ENCODE measurements at regions of chrX and their contacts with region 1.

Region 1: GRCh38 chrX:104195489-104196084 is 29.3 kb downstream of the FAM199X start:
- DNase-seq: peak in 5 of 9 donors; percentile 6 to 34 (median 22)
- ATAC-seq: peak; percentile 61
- H3K4me3 ChIP-seq: no peak overlapping the region
- H3K4me3 Mint-ChIP-seq: no peak overlapping the region
- H3K27ac ChIP-seq: no peak overlapping the region
- H3K27ac Mint-ChIP-seq: no peak overlapping the region
- H3K4me1 ChIP-seq: no peaks in the 10 kb centered on the region
- H3K4me1 Mint-ChIP-seq: peaks cover 0 to 5% (median 0%) of the 10 kb centered on the region in 7 donors
- H3K27me3 ChIP-seq: no peaks in the 10 kb centered on the region
- H3K27me3 Mint-ChIP-seq: no peaks in the 10 kb centered on the region

Region 2: GRCh38 chrX:103932133-103932532 is 263.5 kb before region 1 on chrX:
- CTCF ChIA-PET with region 1: no interaction called
- POLR2A ChIA-PET with region 1: no interaction called
- intact Hi-C with region 1: no loop called
- DNase-seq: no peak
- ATAC-seq: no peak
- H3K4me3 ChIP-seq: no peak overlapping the region
- H3K4me3 Mint-ChIP-seq: no peak overlapping the region
- H3K27ac ChIP-seq: no peak overlapping the region
- H3K27ac Mint-ChIP-seq: no peak overlapping the region
- H3K4me1 ChIP-seq: no peaks in the 10 kb centered on the region
- H3K4me1 Mint-ChIP-seq: peaks cover 0 to 3% (median 0%) of the 10 kb centered on the region in 7 donors
- H3K27me3 ChIP-seq: no peaks in the 10 kb centered on the region
- H3K27me3 Mint-ChIP-seq: no peaks in the 10 kb centered on the region

Region 3: DNA sequence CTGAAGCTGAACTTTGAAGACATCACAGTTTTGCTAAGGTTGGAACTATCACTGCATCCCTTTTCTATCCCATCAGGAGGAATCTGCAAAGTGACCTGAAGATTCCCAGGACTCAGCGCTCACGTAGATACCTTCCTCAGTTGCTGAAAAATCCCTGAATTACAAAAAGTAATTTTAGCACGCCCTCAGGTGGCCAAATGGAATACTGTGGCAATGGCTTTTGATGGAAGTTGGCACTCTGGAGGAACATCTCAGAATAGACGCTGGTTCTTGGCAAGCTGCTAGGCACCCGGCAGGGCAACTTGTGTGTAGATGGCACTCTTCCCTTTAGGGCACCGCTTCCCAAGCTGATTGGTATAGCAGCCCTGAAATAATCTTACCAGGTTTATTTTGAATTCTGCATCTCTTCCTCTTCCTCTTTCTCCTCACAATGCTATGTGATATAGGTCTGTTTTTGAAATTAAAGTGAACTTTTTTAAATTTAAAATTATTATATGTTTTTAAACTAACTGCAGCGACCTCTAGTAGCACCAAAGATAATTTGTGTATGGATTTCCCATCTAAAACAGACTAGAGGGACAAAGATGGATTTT is 75.4 kb after region 1 on chrX:
- CTCF ChIA-PET with region 1: no interaction called
- POLR2A ChIA-PET with region 1: no interaction called
- intact Hi-C with region 1: loop called (anchors 1 to 2 kb)
- DNase-seq: peak in 3 of 9 donors; percentile 1 to 10 (median 4)
- ATAC-seq: no peak
- H3K4me3 ChIP-seq: no peak overlapping the region
- H3K4me3 Mint-ChIP-seq: peak overlapping the region in 8 of 10 donors; percentile 3 to 70 (median 44)
- H3K27ac ChIP-seq: no peak overlapping the region
- H3K27ac Mint-ChIP-seq: no peak overlapping the region
- H3K4me1 ChIP-seq: no peaks in the 10 kb centered on the region
- H3K4me1 Mint-ChIP-seq: peaks cover 0 to 5% (median 0%) of the 10 kb centered on the region in 7 donors
- H3K27me3 ChIP-seq: no peaks in the 10 kb centered on the region
- H3K27me3 Mint-ChIP-seq: peaks cover 0 to 20% (median 16%) of the 10 kb centered on the region in 5 donors

Region 4: DNA sequence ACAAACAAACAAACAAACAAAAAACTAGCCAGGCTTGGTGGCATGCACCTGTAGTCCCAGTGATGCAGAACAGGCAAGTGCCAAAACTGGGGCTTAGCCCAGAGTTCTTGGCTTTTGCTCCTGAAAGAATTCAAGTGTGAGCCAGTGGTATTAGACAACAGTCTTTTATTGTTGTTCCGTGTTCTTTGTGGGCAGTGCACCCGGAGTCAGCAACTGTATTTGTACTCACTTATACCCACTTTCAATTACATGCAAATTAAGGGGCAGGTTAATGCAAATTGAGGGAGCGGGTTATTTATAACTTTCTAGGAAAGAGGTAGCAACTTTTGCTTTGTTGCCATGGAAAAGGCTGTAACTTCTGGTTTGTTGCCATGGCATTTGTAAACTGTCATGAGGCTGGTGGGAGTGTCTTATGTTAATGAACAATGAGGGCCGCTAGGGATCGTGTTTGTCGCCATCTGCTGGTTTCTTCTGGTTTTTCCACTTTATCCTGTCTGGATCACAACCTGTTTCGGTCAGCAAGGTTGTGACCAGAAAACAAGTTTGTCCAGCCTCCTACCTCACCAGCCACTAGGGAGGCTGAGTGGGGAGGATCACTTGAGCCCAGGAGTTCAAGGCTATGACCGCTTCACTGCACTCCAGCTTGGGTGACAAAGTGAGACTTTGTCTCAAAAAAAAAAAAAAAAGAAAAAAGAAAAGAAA is 148.0 kb after region 1 on chrX:
- CTCF ChIA-PET with region 1: no interaction called
- POLR2A ChIA-PET with region 1: no interaction called
- intact Hi-C with region 1: loop called in 1 of 2 experiments (anchors 5 kb)
- DNase-seq: peak in 8 of 9 donors; percentile 6 to 32 (median 18)
- ATAC-seq: peak; percentile 63
- H3K4me3 ChIP-seq: no peak overlapping the region
- H3K4me3 Mint-ChIP-seq: no peak overlapping the region
- H3K27ac ChIP-seq: no peak overlapping the region
- H3K27ac Mint-ChIP-seq: no peak overlapping the region
- H3K4me1 ChIP-seq: no peaks in the 10 kb centered on the region
- H3K4me1 Mint-ChIP-seq: peaks cover 0 to 3% (median 0%) of the 10 kb centered on the region in 7 donors
- H3K27me3 ChIP-seq: no peaks in the 10 kb centered on the region
- H3K27me3 Mint-ChIP-seq: peaks cover 4 to 16% (median 9%) of the 10 kb centered on the region in 5 donors

Measured in naive thymus-derived CD4-positive, alpha-beta T cell (primary cell).